ENCODE measurements at regions of chr19 and their contacts with region 1.

Region 1: DNA sequence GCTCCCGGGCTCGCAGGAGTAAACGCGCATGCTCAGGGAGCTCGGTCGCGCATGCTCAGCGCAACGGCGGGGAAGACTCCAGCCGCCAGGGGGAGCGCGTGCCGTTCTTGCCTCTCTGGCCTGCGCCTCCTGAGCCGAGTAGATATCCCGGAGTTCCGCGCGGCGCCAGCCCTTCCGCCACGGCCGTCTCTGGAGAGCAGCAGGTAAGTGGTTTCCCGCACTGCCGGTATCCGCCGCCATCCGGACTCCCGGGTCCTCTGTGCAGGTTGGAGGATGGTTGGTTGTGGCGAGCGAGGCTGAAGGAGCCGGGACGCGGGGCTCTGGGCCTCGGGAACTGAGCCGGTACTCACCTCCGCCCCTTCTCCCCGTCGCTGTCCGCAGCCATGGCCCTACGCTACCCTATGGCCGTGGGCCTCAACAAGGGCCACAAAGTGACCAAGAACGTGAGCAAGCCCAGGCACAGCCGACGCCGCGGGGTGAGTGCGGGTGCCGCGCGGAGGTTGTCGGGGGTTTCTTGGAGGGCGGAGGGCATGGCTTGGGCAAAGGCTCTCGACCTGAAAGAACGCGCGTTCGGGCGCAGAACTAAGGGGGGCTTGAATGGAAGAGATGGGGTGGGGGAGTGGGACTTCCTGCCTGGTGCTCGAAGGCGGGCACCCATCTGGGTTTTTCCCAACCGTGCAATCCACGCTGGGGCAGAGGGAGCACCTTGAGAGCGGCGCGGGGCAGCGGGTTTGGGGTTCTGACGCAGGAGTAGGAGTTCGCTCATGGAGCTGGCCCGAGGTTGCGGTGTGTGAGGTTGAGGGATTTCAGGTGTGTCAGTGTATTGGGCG is at the start of gene RPL36:
- DNase-seq: peak; percentile 99
- ATAC-seq: peak; percentile 45
- H3K4me3 ChIP-seq: peak within 1 kb of the TSS; percentile 97
- H3K27ac ChIP-seq: peak within 1 kb of the TSS; percentile 63
- H3K4me1 ChIP-seq: peaks cover 7% of the 10 kb centered on the region
- H3K27me3 ChIP-seq: no peaks in the 10 kb centered on the region
- CTCF ChIP-seq: peak; percentile 94
- total RNA-seq, gene RPL36: 2,190 and 2,470 TPM in 2 replicates

Region 2: DNA sequence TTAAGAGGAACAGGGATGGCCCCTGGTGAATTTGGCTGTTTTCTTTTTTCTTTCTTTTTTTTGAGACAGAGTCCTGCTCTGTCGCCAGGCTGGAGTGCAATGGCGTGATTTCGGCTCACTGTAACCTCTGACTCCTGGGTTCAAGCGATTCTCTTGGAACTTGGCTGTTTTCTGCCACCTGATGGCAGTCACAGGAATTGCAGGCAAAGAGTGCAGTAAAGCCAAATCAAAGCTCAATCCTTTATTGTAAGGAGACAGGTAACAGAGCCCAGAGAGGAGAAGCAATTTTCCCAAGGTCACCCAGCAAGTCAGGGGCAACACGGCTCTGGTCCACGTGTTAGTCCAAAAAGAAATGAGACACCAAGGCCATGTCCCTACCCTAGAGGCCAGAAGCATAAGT is 128.8 kb before region 1 on chr19:
- CTCF ChIA-PET with region 1: no interaction called
- POLR2A ChIA-PET with region 1: no interaction called
- intact Hi-C with region 1: no loop called
- DNase-seq: peak; percentile 55
- ATAC-seq: no peak
- H3K4me3 ChIP-seq: no peak overlapping the region
- H3K27ac ChIP-seq: no peak overlapping the region
- H3K4me1 ChIP-seq: no peaks in the 10 kb centered on the region
- H3K27me3 ChIP-seq: peaks cover 8% of the 10 kb centered on the region
- CTCF ChIP-seq: peak; percentile 88

Region 3: GRCh38 chr19:5622463-5623396 is 67.6 kb before region 1 on chr19 and contains the starts of genes SAFB and SAFB2:
- CTCF ChIA-PET with region 1: interaction called, 5 read pairs
- POLR2A ChIA-PET with region 1: interaction called, 14 read pairs
- intact Hi-C with region 1: no loop called
- DNase-seq: peak; percentile 100
- ATAC-seq: peak; percentile 90
- H3K4me3 ChIP-seq: peak within 1 kb of the TSS; percentile 90
- H3K27ac ChIP-seq: peak within 1 kb of the TSS; percentile 67
- H3K4me1 ChIP-seq: peaks cover 36% of the 10 kb centered on the region
- H3K27me3 ChIP-seq: no peaks in the 10 kb centered on the region
- CTCF ChIP-seq: no peak
- total RNA-seq, gene SAFB: 94.9 and 164 TPM in 2 replicates
- total RNA-seq, gene SAFB2: 77.5 and 101 TPM in 2 replicates

Region 4: GRCh38 chr19:5676105-5676771 is 14.1 kb before region 1 on chr19:
- CTCF ChIA-PET with region 1: interaction called, 3 read pairs
- POLR2A ChIA-PET with region 1: interaction called, 14 read pairs
- intact Hi-C with region 1: no loop called
- DNase-seq: no peak
- ATAC-seq: no peak
- H3K4me3 ChIP-seq: no peak overlapping the region
- H3K27ac ChIP-seq: no peak overlapping the region
- H3K4me1 ChIP-seq: peaks cover 8% of the 10 kb centered on the region; the same call in 1 of the 2 replicates
- H3K27me3 ChIP-seq: no peaks in the 10 kb centered on the region
- CTCF ChIP-seq: no peak

Region 5: GRCh38 chr19:5719961-5720790 is 29.8 kb after region 1 on chr19 and contains the starts of genes CATSPERD and LONP1:
- CTCF ChIA-PET with region 1: interaction called, 9 read pairs
- POLR2A ChIA-PET with region 1: interaction called, 6 read pairs
- intact Hi-C with region 1: loop called (anchors 1 kb)
- DNase-seq: peak; percentile 100
- ATAC-seq: peak; percentile 89
- H3K4me3 ChIP-seq: peak within 1 kb of the TSS; percentile 95
- H3K27ac ChIP-seq: peak within 1 kb of the TSS; percentile 93
- H3K4me1 ChIP-seq: peaks cover 18% of the 10 kb centered on the region
- H3K27me3 ChIP-seq: no peaks in the 10 kb centered on the region
- CTCF ChIP-seq: peak; percentile 92
- total RNA-seq, gene CATSPERD: not detected in 2 replicates
- total RNA-seq, gene LONP1: 217 and 306 TPM in 2 replicates

Region 6: DNA sequence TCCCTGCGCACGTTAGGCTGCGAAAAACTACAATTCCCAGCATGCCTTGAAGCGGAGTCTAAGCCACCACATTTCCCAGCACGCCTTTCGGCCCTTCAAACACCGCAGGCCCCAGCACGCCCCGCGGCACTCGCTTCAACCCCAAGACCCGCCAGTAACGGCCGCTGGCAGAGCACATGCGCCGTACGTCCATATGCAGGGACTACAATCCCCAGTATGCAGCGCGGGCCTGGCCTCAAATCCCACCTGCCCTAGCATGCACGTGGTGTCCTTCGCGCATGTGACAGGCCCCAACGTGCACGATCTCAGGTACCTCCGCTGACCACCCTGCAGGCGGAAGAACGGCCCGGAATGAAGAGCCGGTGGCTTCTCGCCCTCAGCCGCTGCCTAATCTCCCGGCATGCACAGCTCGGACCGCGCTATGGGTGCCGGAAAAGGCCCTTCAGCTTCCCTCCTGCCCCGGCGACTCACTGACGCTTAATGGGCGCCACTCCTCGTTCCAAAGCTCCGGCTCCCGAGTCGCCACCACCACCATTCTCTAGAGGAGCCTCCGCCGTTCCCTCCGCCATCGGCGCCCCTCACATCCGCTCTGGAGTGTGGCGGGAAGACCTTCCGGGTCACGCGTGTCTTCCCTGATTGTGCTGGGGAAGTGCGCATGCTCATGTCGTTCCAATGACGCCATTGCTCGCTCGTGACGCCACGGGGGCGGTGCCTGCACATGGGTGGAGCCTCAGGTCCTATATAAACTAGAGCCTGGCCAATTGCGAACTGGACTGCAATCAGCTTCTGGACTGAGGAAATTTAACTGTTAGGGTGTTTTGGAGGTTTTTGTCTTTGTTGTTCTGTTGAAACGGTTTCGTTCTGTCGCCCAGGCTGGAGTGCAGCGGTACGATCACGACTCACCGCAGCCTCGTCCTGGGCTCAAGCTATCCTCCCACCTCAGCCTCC is 100.5 kb after region 1 on chr19 and contains the start of gene DUS3L:
- CTCF ChIA-PET with region 1: no interaction called
- POLR2A ChIA-PET with region 1: no interaction called
- intact Hi-C with region 1: loop called (anchors 10 kb)
- DNase-seq: peak; percentile 99
- ATAC-seq: peak; percentile 95
- H3K4me3 ChIP-seq: peak within 1 kb of the TSS; percentile 78
- H3K27ac ChIP-seq: peak within 1 kb of the TSS; percentile 91
- H3K4me1 ChIP-seq: peaks cover 8% of the 10 kb centered on the region
- H3K27me3 ChIP-seq: no peaks in the 10 kb centered on the region
- CTCF ChIP-seq: no peak
- total RNA-seq, gene DUS3L: 118 and 148 TPM in 2 replicates

Region 7: DNA sequence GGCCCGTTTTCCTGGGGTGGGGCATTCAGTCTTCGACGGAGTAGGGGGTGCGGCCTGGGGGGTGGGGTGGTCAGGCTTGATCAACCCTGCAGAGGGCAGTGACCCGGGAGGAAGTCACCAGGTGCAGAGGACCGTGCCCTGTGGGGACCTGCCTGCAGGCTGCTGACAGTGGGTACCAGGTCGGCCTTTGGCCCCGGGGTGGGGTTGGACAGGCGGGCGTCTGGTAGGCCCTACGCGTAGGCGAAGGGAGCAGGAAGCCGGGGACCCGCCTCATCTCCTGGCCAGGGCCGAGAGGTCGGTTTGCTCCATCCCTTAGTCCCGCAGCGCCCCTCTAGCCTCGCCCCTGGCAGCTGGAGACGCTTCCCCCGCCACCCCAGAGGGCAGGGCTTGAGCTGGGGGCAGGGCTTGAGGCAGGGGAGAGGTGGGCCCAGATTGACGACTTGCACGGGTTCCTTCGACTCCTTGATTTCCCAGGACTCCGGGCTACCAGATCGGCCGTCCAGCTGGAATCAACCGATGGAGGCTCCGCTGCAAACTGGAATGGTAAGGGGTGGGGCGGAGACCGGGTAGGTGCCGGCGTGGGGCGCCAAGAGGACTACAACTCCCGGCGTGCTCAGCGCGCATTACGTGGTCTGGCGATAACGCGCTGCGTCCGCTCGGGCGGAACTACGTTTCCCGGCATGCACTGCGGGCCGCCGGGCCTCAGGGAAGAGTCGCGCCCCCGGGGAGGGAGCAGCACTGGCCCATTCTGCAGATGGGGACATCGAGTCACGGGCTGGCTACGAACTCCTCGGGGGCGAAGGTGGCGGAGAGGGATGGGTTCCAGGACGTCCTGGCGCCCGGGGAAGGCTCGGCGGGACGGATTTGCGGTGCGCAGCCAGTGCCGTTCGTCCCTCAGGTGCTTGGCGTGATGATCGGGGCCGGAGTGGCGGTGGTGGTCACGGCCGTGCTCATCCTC is 1845.0 kb after region 1 on chr19 and contains the start of gene PNPLA6:
- CTCF ChIA-PET with region 1: no interaction called
- POLR2A ChIA-PET with region 1: no interaction called
- intact Hi-C with region 1: loop called (anchors 10 kb)
- DNase-seq: peak; percentile 98
- ATAC-seq: peak; percentile 72
- H3K4me3 ChIP-seq: peak within 1 kb of the TSS; percentile 98
- H3K27ac ChIP-seq: peak within 1 kb of the TSS; percentile 24; the same call in 1 of the 2 replicates
- H3K4me1 ChIP-seq: peaks cover 10% of the 10 kb centered on the region
- H3K27me3 ChIP-seq: no peaks in the 10 kb centered on the region
- CTCF ChIP-seq: no peak
- total RNA-seq, gene PNPLA6: 217 and 291 TPM in 2 replicates